HepG2 (cell line): ENCODE measurements at regions of chr5 and their contacts with region 1.

Region 1: DNA sequence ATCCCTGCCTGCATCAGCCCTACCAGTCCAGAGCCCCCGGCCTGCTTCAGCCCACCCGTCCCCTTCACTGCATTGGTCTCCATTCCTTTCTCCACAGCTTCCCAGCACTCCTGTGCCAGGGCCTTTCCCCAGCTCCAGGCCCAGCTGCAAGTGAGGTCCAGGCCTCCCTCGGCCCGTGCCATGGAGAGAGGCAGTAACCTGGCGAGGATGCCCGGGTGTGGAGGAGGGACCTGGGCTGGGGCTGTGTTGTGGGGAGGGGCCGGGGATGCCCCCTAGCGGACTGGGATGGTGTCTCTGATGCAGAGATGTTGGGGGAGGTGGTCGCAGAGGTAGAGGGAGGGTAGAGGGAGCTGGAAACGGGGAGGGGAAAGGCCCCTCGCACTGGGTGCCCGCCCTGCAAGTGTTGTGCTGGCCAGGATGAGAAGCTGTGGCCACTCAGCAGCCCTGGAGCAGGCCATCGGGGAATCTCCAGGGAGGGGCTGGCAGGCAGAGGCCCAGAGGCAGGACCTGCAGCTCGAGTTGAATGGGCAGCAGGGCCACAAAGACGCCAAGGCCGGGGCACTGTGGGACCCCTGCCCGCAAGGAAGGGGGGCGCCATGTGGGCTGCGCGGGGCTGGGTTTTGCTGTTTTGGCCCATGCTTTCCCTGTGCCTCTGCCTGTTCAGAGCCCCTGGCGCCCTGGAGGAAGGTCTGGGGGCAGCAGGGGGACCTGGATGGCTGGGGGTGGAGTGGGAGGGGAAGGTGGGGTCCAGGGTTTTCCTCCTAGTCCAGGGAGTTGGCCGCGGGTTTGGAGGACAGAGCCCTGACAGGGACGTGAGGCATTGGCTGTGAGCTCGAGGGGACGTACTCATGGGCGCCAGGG is 26.0 kb upstream of the NKD2 start:
- DNase-seq: no peak
- ATAC-seq: peak; percentile 91
- H3K4me3 ChIP-seq: no peak overlapping the region
- H3K27ac ChIP-seq: no peak overlapping the region
- H3K4me1 ChIP-seq: peaks cover 20% of the 10 kb centered on the region
- H3K27me3 ChIP-seq: peaks cover 9 to 35% of the 10 kb centered on the region in 2 experiments; a peak in 4 of 5 replicates
- CTCF ChIP-seq: peak; percentile 56
- EP300 ChIP-seq: no peak
- POLR2A ChIP-seq: no peak
- RAD21 ChIP-seq: peak; percentile 37; the same call in 1 of the 2 replicates

Region 2: DNA sequence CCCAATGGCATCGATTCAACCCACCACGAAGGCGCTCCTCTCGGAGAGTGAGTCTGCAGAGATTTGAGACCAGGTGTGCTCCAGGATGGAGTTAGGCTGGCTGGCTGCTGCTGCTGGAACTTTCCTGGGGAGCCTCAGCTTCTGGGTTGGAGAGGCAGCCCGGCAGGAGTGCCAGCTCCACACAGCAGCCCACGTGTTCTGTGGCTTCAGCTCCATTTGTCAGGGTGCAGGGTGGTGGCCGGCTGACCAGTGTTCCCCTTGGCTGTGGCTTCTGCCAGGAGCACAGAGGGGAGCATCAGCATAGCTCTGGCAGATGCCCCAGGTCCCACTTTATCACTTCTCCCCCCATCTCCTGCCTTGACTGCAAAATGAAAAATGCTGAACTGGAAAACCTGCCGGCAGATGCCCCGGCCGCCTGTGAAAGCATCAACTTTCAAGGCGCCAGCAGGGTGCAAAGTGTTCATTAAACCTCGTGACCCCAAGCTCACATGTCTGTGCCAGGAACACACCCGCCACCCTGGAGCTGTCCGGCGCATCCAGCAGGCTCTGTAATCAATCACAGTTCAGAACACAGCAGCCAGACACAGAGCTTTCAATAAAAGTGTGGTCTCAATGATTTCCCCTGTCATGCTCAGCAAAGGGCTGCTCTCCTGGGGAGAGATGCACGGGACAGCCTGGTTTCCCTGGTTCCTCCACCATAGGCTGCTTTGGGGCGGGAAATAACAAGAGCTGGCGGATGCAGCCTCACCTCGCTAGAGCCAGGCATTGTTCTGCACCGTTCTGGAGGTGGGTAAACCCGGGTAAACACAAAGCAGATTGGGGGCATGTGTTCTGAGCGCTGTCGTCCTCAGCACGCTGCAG is 36.7 kb before region 1 on chr5:
- CTCF ChIA-PET with region 1: no interaction called
- POLR2A ChIA-PET with region 1: no interaction called
- in situ Hi-C with region 1: no loop called
- intact Hi-C with region 1: no loop called
- DNase-seq: no peak
- ATAC-seq: peak; percentile 52
- H3K4me3 ChIP-seq: no peak overlapping the region
- H3K27ac ChIP-seq: no peak overlapping the region
- H3K4me1 ChIP-seq: no peaks in the 10 kb centered on the region
- H3K27me3 ChIP-seq: peaks cover 20 to 59% of the 10 kb centered on the region in 2 experiments
- CTCF ChIP-seq: no peak
- EP300 ChIP-seq: no peak
- POLR2A ChIP-seq: no peak
- RAD21 ChIP-seq: no peak

Region 3: GRCh38 chr5:969408-969839 is 13.2 kb before region 1 on chr5:
- CTCF ChIA-PET with region 1: no interaction called
- POLR2A ChIA-PET with region 1: no interaction called
- in situ Hi-C with region 1: no loop called
- intact Hi-C with region 1: loop called (anchors 1 kb)
- DNase-seq: no peak
- ATAC-seq: no peak
- H3K4me3 ChIP-seq: no peak overlapping the region
- H3K27ac ChIP-seq: no peak overlapping the region
- H3K4me1 ChIP-seq: no peaks in the 10 kb centered on the region
- H3K27me3 ChIP-seq: peaks cover 3 to 60% of the 10 kb centered on the region in 2 experiments; a peak in 3 of 5 replicates
- CTCF ChIP-seq: no peak
- EP300 ChIP-seq: no peak
- POLR2A ChIP-seq: no peak
- RAD21 ChIP-seq: no peak